Dendritic cell treated with granulocyte-macrophage colony-stimulating factor and Interleukin-4, amounts not matched to agents 40 ng/mL and 50 ng/mL, for 4 days (primary cell): ENCODE measurements at regions of chr5 and their contacts with region 1.

Region 1: DNA sequence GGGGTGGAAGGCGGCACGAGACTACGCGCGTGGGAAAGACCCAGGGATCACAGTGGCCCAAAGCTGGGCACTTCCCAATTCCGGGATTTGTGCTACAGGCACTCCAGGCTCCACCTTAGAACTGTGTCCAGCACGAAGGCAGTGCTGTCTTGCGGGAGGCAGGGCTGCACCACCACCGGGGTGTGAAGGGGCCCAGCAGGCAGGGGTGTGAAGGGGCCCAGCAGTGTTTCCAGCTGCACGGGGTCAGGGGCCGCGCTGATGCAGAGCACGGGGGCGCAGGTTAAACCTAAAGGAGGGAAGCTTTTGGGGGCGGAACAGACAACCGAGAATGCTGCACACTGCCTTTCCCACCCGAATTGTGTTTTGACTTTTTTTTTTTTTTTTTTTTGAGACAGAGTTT is 1.1 kb upstream of the PDCD6 start:
- H3K4me3 Mint-ChIP-seq: peak overlapping the region; percentile 95
- H3K27ac Mint-ChIP-seq: peak overlapping the region; percentile 96
- H3K4me1 Mint-ChIP-seq: peaks cover 32% of the 10 kb centered on the region
- H3K27me3 Mint-ChIP-seq: no peaks in the 10 kb centered on the region

Region 2: DNA sequence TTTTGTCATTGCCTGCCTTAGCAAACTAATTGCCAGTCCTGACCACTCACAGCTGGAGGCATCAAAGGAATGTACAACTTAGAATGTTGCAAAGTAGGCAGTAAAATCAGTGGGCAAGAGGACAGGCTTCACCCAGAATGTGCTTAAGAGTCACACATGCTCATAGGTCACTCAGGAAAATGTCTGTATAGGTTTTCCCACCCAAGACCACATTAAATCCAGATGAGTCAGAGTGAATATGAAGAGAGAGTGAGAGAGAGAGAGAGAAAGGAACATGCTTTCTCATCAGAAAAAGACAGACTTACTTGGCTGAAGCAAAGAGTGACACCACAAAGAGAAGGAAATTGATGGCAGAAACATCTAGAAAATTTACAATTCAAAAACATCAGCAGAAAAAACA is 140.5 kb before region 1 on chr5:
- intact Hi-C with region 1: no loop called
- H3K4me3 Mint-ChIP-seq: no peak overlapping the region
- H3K27ac Mint-ChIP-seq: no peak overlapping the region
- H3K4me1 Mint-ChIP-seq: peaks cover 8% of the 10 kb centered on the region
- H3K27me3 Mint-ChIP-seq: peaks cover 1% of the 10 kb centered on the region

Region 3: DNA sequence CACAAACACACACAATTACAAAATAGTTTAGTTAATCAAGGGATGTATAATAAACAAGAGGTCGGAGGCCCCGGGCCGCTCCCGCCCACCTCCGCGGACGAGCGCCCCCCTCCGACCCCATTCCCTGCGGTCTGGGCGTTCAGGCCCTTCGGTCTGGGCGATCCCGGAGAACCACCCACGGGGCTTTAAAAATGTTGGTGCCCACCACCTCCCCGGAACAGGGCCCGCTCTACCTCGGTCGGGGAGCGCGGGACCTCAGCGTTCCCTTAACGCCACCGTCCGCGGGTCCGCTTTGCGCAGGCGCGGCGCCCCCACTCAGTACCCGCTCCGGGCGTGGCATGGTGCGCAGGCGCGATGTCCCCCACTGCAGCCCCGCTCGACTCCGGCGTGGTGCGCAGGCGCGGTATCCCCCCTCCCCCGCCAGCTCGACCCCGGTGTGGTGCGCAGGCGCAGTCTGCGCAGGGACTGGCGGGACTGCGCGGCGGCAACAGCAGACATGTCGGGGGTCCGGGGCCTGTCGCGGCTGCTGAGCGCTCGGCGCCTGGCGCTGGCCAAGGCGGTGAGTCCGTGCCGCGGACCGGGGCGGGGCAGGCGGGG is 52.4 kb before region 1 on chr5 and contains the starts of genes CCDC127 and SDHA:
- intact Hi-C with region 1: loop called (anchors 1 kb)
- H3K4me3 Mint-ChIP-seq: peak within 1 kb of the TSS; percentile 90
- H3K27ac Mint-ChIP-seq: peak within 1 kb of the TSS; percentile 87
- H3K4me1 Mint-ChIP-seq: peaks cover 61% of the 10 kb centered on the region
- H3K27me3 Mint-ChIP-seq: no peaks in the 10 kb centered on the region

Region 4: GRCh38 chr5:458547-459353 is 188.4 kb after region 1 on chr5:
- intact Hi-C with region 1: no loop called
- H3K4me3 Mint-ChIP-seq: no peak overlapping the region
- H3K27ac Mint-ChIP-seq: no peak overlapping the region
- H3K4me1 Mint-ChIP-seq: peaks cover 30% of the 10 kb centered on the region
- H3K27me3 Mint-ChIP-seq: no peaks in the 10 kb centered on the region

Region 5: GRCh38 chr5:892394-893136 is 622.2 kb after region 1 on chr5 and contains the starts of genes BRD9 and TRIP13:
- intact Hi-C with region 1: loop called (anchors 5 kb)
- H3K4me3 Mint-ChIP-seq: peak within 1 kb of the TSS; percentile 71
- H3K27ac Mint-ChIP-seq: peak within 1 kb of the TSS; percentile 87
- H3K4me1 Mint-ChIP-seq: peaks cover 17% of the 10 kb centered on the region
- H3K27me3 Mint-ChIP-seq: no peaks in the 10 kb centered on the region